MCF 10A (cell line): ENCODE measurements at regions of chr3 and their contacts with region 1.

Region 1: DNA sequence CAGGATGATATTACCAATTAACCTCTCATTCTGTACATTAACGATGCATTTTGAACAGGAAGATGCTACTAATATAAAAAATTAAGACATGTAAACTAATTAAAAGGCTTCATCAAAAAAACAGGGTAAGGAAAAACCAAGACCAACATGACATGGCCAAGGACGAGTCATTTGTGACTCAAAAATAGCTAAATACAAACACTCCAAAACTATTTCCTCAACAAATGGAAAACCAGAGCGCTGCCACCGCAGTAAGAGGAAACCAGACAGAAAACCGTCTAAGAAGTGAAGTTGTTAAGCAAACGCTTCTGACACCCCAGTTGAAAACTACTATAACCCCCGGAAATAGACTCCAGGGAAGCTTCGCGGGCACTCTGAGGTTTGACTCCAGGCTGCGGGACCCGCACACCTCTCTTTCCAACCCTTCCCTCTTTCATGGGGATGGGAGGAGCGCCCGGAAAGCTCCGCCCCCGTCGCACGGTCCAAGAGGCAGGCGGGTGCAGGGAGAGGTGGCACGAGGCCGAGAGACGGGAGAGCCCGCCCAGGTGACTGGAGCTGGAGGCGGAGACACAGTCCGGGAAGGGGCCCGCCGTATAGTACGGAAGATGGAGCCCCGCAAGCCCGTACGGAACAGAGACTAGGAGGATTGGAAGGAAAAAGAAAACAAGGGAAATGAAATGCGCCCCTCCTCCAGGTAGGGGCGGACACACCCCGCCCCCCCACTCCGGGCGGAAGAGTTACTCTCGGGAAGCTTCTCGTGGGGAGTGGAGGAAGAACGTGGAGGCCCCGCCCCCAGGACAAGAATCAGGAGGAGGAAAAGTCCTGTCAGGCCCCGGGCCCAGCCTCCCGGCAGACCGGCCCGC is 708 bp downstream of the DCAF1 start:
- DNase-seq: peak; percentile 96
- H3K4me3 Mint-ChIP-seq: peak overlapping the region; percentile 88
- H3K27ac Mint-ChIP-seq: peak overlapping the region; percentile 98
- H3K4me1 Mint-ChIP-seq: peaks cover 8% of the 10 kb centered on the region
- H3K27me3 Mint-ChIP-seq: no peaks in the 10 kb centered on the region
- CTCF ChIP-seq: no peak

Region 2: DNA sequence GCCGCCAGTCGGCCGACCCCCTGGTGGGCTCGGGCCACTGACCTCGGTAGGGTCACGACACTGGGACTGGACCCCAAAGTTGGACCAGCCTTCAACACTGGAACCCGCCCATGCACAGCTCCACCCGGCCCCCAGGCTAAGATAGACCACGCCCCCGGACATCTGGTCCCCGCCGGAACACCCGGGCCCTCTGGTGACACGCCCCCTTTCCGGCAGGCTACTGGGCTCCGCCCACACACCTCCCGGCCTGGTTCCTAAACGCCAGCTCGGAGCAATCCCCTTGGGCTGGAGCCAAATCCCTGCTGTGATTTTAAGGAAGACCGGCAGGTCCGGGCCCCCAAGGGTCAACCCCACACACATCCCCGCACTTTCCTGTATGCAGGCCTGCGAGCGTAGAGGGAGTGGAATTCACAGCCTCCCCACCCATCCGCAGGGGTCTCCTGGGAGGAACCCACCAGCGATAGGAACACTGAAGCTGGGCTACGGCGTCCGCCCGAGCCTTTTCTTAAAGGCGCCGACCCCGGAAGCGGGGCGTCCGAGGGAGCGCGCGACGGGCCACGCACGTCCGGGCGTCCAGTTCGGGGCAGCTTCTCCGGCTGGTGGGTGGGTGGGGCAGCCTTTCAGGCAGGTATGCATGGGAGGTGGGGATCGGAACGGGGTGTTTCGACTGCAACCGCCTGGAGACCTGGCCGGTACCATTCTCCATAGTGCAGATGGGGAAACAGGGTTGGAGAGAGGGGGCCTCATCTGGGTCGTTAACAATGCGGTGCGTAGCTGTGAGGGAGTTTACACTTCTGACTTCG is 930.0 kb before region 1 on chr3 and contains the start of gene HEMK1:
- CTCF ChIA-PET with region 1: no interaction called
- POLR2A ChIA-PET with region 1: interaction called, 18 read pairs
- intact Hi-C with region 1: no loop called
- DNase-seq: peak; percentile 94
- H3K4me3 Mint-ChIP-seq: peak within 1 kb of the TSS; percentile 91
- H3K27ac Mint-ChIP-seq: peak within 1 kb of the TSS; percentile 95
- H3K4me1 Mint-ChIP-seq: no peaks in the 10 kb centered on the region
- H3K27me3 Mint-ChIP-seq: no peaks in the 10 kb centered on the region
- CTCF ChIP-seq: no peak
- total RNA-seq, gene HEMK1: 19.9 and 23.8 TPM in 2 replicates

Region 3: DNA sequence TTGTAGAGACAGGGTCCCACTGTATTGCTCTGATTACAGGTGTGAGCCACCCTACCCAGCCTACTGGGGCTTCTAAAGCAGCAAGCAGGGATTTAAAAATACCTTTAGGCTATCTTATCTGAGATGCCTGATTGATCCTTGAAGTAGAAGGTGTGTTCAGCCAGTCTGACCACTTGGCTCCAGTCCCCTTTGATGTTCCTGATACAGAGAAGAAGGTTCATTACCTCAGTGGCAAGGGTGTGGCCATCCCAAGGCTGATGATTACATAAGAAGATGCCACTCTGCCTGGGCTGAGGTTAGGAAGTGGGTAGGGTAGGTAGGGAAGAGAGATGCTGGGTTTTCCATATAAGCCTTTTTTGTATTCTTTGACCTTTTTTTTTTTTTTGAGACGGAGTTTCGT is 11.9 kb after region 1 on chr3:
- CTCF ChIA-PET with region 1: interaction called, 10 read pairs
- POLR2A ChIA-PET with region 1: interaction called, 3 read pairs
- intact Hi-C with region 1: no loop called
- DNase-seq: no peak
- H3K4me3 Mint-ChIP-seq: no peak overlapping the region
- H3K27ac Mint-ChIP-seq: no peak overlapping the region
- H3K4me1 Mint-ChIP-seq: no peaks in the 10 kb centered on the region
- H3K27me3 Mint-ChIP-seq: no peaks in the 10 kb centered on the region
- CTCF ChIP-seq: no peak

Region 4: DNA sequence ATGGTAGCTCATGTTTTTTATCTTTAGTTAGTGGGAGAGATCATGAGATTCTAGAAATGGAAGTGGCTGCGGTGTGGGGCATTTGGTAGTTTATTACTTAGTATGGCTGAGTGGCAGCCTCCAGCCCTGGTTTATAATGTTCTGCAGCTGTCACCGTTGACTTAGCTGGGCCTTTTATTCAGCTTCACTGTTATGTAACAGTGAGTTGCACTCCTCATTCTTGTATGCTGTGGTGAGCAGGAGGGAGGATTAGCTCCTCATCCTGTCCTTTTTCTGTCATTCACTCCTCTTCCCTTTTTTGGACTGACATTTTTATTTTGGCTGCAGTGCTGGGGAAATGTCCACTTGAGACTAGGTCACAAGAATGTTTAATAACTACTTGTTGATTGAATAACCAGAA is 68.9 kb after region 1 on chr3:
- CTCF ChIA-PET with region 1: interaction called, 10 read pairs
- POLR2A ChIA-PET with region 1: interaction called, 3 read pairs
- intact Hi-C with region 1: no loop called
- DNase-seq: no peak
- H3K4me3 Mint-ChIP-seq: no peak overlapping the region
- H3K27ac Mint-ChIP-seq: no peak overlapping the region
- H3K4me1 Mint-ChIP-seq: no peaks in the 10 kb centered on the region
- H3K27me3 Mint-ChIP-seq: no peaks in the 10 kb centered on the region
- CTCF ChIP-seq: no peak

Region 5: GRCh38 chr3:51630513-51630912 is 131.4 kb after region 1 on chr3:
- CTCF ChIA-PET with region 1: interaction called, 16 read pairs
- POLR2A ChIA-PET with region 1: no interaction called
- intact Hi-C with region 1: no loop called
- DNase-seq: no peak
- H3K4me3 Mint-ChIP-seq: no peak overlapping the region
- H3K27ac Mint-ChIP-seq: no peak overlapping the region
- H3K4me1 Mint-ChIP-seq: no peaks in the 10 kb centered on the region
- H3K27me3 Mint-ChIP-seq: no peaks in the 10 kb centered on the region
- CTCF ChIP-seq: no peak

Region 6: GRCh38 chr3:51670823-51671733 is 172.0 kb after region 1 on chr3 and contains the start of gene TEX264:
- CTCF ChIA-PET with region 1: interaction called, 213 read pairs
- POLR2A ChIA-PET with region 1: interaction called, 173 read pairs
- intact Hi-C with region 1: loop called (anchors 1 kb)
- DNase-seq: peak; percentile 90
- H3K4me3 Mint-ChIP-seq: peak within 1 kb of the TSS; percentile 89
- H3K27ac Mint-ChIP-seq: peak within 1 kb of the TSS; percentile 86
- H3K4me1 Mint-ChIP-seq: peaks cover 45% of the 10 kb centered on the region
- H3K27me3 Mint-ChIP-seq: no peaks in the 10 kb centered on the region
- CTCF ChIP-seq: no peak
- total RNA-seq, gene TEX264: 41.3 and 46.4 TPM in 2 replicates

Region 7: DNA sequence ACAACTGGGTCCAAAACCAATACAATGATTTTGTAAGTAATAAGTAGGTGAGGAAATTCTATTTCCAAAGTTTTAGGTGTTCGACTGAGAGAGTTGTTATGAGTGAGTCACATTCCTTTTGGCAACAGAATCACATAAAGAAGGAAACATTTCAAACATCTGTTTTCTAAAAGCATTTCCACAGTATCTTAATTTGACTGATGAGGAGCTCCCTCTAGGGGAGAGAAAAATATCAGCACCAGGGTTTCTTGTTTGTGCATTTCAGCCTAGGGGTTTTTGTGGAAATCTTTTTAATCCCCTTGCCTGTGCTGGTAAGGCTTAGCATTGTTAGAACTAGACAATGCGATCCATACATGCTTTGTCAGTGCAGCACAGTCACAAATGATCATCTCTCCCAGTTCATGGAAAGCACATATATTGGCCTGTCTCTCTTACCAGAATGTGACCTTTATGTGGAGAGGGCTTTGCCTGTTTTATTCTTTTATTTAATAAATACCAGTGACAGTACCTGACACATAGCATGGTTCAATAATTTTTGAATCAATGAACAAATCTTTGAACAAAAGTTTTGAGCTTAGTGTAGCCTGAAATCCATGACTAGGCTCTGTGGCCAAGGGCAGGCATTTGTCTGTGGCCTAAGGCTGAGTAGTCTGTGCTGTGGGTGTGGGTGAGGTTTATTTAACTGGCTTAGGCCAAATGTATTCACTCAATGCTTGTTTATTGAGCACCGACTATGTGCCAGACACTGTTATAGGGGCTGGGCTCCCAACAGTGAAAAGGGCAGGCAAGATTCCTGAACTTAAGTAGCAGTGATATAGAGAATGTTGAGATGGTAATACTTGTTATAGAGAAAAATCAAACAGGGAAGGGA is 301.0 kb after region 1 on chr3:
- CTCF ChIA-PET with region 1: interaction called, 19 read pairs
- POLR2A ChIA-PET with region 1: interaction called, 6 read pairs
- intact Hi-C with region 1: loop called (anchors 1 kb)
- DNase-seq: peak; percentile 77
- H3K4me3 Mint-ChIP-seq: no peak overlapping the region
- H3K27ac Mint-ChIP-seq: no peak overlapping the region
- H3K4me1 Mint-ChIP-seq: peaks cover 13% of the 10 kb centered on the region
- H3K27me3 Mint-ChIP-seq: no peaks in the 10 kb centered on the region
- CTCF ChIP-seq: peak; percentile 80